Activated CD8-positive, alpha-beta memory T cell treated with anti-CD3 and anti-CD28 coated beads, Interleukin-2, amount 10 ng/mL, durations not matched to agents 7 days and 5 days (primary cell): ENCODE measurements at regions of chr14 and their contacts with region 1.

Region 1: GRCh38 chr14:99393047-99393655 is 87.5 kb downstream of the SETD3 start:
- DNase-seq: peak; percentile 51
- ATAC-seq: peak; percentile 30
- H3K4me3 Mint-ChIP-seq: no peak overlapping the region
- H3K27ac Mint-ChIP-seq: no peak overlapping the region
- H3K4me1 Mint-ChIP-seq: peaks cover 20% of the 10 kb centered on the region
- H3K27me3 Mint-ChIP-seq: no peaks in the 10 kb centered on the region

Region 2: DNA sequence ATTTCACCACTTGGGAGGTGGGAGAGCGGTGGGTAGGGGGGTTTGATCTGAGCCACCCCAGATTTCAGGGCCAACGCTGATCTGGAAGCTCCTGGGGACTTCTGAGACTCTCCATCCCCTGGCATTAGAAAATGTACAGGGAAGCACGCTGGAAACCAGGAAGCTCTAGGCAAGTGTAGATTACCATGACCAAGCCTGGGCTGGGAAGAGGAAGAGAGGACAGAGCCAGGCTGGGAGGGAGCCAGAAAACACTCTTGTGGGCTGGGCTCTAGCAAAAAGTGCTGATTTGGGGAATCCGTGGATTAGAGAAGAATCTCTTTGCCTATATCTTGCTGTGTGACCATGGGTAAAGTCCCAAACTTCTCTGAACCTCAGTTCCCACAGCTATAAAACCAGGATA is 357.9 kb before region 1 on chr14:
- CTCF ChIA-PET with region 1: no interaction called
- DNase-seq: no peak
- ATAC-seq: no peak
- H3K4me3 Mint-ChIP-seq: no peak overlapping the region
- H3K27ac Mint-ChIP-seq: no peak overlapping the region
- H3K4me1 Mint-ChIP-seq: no peaks in the 10 kb centered on the region
- H3K27me3 Mint-ChIP-seq: no peaks in the 10 kb centered on the region

Region 3: DNA sequence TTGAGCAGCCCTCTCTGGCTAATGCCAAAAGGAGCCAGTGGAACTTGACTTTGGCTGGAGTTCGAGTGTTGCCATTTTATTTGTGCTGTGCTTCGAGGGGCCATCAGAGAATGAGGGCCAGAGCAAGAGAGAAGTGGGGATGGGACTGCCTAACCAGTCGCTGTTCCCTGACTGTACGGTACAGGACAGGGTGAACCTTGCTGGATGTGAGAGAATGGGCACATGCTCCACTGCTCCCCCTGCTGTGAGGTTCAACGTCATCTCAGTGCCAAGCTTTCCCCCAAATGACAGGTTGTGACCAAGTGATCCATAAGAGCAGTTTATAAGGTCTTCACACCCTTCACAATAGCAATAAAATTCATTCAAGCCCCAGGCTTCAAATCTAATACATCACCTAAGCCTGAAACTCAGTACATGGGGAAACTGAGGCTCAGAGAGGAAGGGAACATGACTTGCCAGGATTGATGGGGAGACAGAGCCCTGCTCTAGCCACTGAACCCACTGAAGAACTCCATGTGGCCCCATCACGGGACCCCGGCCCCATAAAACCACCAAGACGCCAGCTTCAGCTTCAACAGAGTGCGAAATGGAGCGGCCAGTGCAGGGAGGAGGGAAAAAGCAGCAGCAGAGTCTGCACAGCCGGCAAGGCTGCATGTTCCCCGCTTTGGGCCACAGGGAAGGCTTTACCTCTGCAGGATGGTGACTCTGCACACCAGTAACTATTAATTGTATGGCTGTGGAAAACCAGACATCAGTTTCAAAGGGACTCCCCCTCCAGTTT is 65.9 kb before region 1 on chr14:
- CTCF ChIA-PET with region 1: no interaction called
- DNase-seq: peak; percentile 31
- ATAC-seq: no peak
- H3K4me3 Mint-ChIP-seq: no peak overlapping the region
- H3K27ac Mint-ChIP-seq: no peak overlapping the region
- H3K4me1 Mint-ChIP-seq: no peaks in the 10 kb centered on the region
- H3K27me3 Mint-ChIP-seq: peaks cover 17% of the 10 kb centered on the region

Region 4: GRCh38 chr14:99378782-99379214 is 14.4 kb before region 1 on chr14:
- CTCF ChIA-PET with region 1: interaction called, 10 read pairs
- DNase-seq: no peak
- ATAC-seq: no peak
- H3K4me3 Mint-ChIP-seq: no peak overlapping the region
- H3K27ac Mint-ChIP-seq: no peak overlapping the region
- H3K4me1 Mint-ChIP-seq: no peaks in the 10 kb centered on the region
- H3K27me3 Mint-ChIP-seq: peaks cover 13% of the 10 kb centered on the region